ENCODE measurements at regions of chr15 and their contacts with region 1.

Region 1: GRCh38 chr15:38440353-38441129 is 13.4 kb upstream of the FAM98B start:
- DNase-seq: peak; percentile 41
- H3K4me3 ChIP-seq: no peak overlapping the region
- H3K27ac ChIP-seq: no peak overlapping the region
- H3K27me3 ChIP-seq: peaks cover 29% of the 10 kb centered on the region
- CTCF ChIP-seq: peak; percentile 96

Region 2: DNA sequence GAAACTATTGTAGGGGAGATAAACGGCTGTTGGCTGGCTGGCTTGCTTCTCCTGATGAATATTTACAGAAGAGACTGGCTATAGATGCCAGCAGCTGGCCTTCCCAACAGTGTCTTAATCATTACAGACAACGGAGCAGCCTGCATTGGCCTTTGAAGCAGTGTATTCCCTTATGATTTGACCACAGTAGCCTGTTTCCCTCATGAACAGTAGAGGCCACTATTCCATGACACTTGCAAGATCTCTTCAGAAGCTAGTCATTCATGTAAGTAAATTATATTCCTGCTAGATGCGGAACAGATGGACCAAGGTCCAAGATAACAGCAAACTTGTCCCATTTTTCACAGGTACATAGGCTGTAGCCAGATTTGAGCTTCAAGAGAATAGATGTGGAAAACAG is 458.8 kb before region 1 on chr15:
- CTCF ChIA-PET with region 1: no interaction called
- POLR2A ChIA-PET with region 1: no interaction called
- DNase-seq: no peak
- H3K4me3 ChIP-seq: no peak overlapping the region
- H3K27ac ChIP-seq: no peak overlapping the region
- H3K27me3 ChIP-seq: peaks cover 2% of the 10 kb centered on the region
- CTCF ChIP-seq: peak; percentile 68

Region 3: GRCh38 chr15:38378161-38378560 is 62.4 kb before region 1 on chr15:
- CTCF ChIA-PET with region 1: no interaction called
- POLR2A ChIA-PET with region 1: no interaction called
- DNase-seq: no peak
- H3K4me3 ChIP-seq: no peak overlapping the region
- H3K27ac ChIP-seq: no peak overlapping the region
- H3K27me3 ChIP-seq: no peaks in the 10 kb centered on the region
- CTCF ChIP-seq: no peak

Region 4: GRCh38 chr15:38427380-38427779 is 13.2 kb before region 1 on chr15:
- CTCF ChIA-PET with region 1: interaction called, 17 read pairs
- POLR2A ChIA-PET with region 1: no interaction called
- DNase-seq: no peak
- H3K4me3 ChIP-seq: no peak overlapping the region
- H3K27ac ChIP-seq: no peak overlapping the region
- H3K27me3 ChIP-seq: peaks cover 21% of the 10 kb centered on the region
- CTCF ChIP-seq: no peak

Region 5: GRCh38 chr15:38563723-38564519 is 123.4 kb after region 1 on chr15:
- CTCF ChIA-PET with region 1: interaction called, 25 read pairs
- POLR2A ChIA-PET with region 1: no interaction called
- DNase-seq: no peak
- H3K4me3 ChIP-seq: peak overlapping the region; percentile 61
- H3K27ac ChIP-seq: no peak overlapping the region
- H3K27me3 ChIP-seq: peaks cover 17% of the 10 kb centered on the region
- CTCF ChIP-seq: peak; percentile 85

Region 6: GRCh38 chr15:38683382-38684242 is 243.1 kb after region 1 on chr15:
- CTCF ChIA-PET with region 1: interaction called, 133 read pairs
- POLR2A ChIA-PET with region 1: no interaction called
- DNase-seq: no peak
- H3K4me3 ChIP-seq: no peak overlapping the region
- H3K27ac ChIP-seq: no peak overlapping the region
- H3K27me3 ChIP-seq: peaks cover 4% of the 10 kb centered on the region
- CTCF ChIP-seq: peak; percentile 82

Region 7: GRCh38 chr15:38699633-38700230 is 259.2 kb after region 1 on chr15:
- CTCF ChIA-PET with region 1: interaction called, 51 read pairs
- POLR2A ChIA-PET with region 1: no interaction called
- DNase-seq: no peak
- H3K4me3 ChIP-seq: no peak overlapping the region
- H3K27ac ChIP-seq: no peak overlapping the region
- H3K27me3 ChIP-seq: peaks cover 2% of the 10 kb centered on the region
- CTCF ChIP-seq: peak; percentile 90

Region 8: DNA sequence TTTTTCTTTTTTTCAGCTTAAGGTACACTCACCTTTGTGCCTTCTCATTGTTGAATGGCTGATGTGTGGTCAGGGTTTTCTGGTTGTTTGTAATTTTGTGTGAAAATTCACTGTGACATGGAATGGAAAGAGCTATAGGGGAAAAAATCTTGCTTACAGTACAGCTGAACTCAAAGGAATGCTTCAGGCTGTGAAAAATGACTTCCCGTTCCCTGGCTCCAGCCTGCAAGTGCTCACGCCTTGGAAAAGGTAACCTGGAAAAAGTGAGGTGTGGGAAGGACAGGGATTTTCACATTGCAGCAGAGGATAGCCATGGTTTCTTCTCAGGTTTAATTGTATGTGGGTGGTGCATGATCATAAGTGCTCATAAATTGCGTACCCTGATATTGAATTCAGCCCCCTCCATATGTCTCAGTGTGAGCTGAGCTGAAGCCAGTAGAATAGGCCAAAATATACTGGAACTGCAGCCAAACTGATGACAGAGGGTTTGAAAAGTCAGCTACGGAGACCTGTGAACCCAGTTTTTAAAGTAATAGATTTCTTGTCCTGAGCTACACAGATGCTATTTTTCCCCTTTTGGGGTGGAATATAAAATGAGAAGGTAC is 352.8 kb after region 1 on chr15:
- CTCF ChIA-PET with region 1: no interaction called
- POLR2A ChIA-PET with region 1: no interaction called
- DNase-seq: no peak
- H3K4me3 ChIP-seq: no peak overlapping the region
- H3K27ac ChIP-seq: no peak overlapping the region
- H3K27me3 ChIP-seq: no peaks in the 10 kb centered on the region
- CTCF ChIP-seq: no peak

Measured in AG04450 (cell line).